Activated CD4-positive, alpha-beta T cell treated with anti-CD3 and anti-CD28 coated beads, Interleukin-2, amount 10 ng/mL, durations not matched to agents 7 days and 5 days (primary cell): ENCODE measurements at regions of chr1 and their contacts with region 1.

Region 1: DNA sequence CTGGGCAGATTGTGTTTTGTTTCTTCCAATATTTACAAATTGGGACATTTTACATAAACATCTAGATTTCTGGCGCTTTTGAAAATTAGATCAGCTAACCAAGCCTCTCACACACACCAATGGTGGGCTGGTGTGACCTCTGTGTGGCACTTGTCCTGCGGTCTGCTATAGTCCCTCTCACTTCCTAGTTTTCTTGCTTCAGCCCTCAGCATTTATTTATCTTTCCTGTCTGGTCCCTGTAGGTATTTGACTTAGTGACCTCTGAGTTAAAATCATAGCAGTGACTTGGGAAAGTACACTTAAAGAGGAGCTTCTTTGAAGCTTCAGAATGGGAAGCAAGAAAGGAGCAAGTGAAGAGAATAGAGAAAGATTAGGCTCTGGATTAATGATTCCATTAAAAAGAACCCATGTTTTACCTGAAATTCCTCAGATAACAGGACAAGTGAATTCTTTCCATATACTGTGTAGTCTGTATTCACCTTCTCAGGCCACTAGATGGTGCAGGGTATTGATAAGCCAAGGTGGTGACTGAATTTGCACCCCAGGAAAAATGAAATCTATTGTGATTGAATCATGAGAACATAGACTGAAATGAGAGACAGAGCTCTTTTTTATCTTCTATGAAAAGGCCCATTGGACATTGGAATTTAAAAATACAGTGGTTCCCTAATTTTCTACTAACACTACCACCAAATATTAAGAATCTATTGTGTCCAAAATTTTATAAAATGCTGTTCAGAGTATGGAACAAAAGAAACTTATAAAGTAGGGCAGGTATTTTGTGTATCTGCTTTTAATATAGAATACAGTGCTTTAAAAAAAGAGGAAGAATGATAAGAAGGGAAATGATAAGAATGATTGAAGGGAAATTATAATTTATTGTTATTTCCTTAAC is 7.1 kb upstream of the DIPK1A start:
- DNase-seq: peak; percentile 62
- H3K4me3 Mint-ChIP-seq: no peak overlapping the region
- H3K27ac Mint-ChIP-seq: no peak overlapping the region
- H3K4me1 Mint-ChIP-seq: peaks cover 34% of the 10 kb centered on the region
- H3K27me3 Mint-ChIP-seq: no peaks in the 10 kb centered on the region

Region 2: DNA sequence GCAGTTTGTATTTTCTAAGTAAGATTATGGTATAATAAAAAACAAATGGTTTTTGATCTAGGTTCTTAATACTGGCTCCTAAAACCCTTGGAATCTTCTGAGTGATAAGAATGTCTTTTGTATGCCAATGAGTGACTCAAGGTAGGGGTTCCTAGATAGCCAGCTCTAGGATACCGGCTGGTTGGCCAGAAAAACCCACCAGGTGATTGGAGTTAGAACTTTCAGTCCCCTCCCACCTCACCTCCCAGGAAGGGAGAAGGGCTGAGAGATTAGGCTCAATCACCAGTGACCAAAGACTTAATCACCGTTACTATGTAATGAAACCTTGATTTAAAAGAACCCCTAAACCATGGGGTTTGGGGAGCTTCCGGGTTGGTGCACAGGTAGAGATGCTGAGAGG is 1027.9 kb before region 1 on chr1:
- CTCF ChIA-PET with region 1: no interaction called
- POLR2A ChIA-PET with region 1: no interaction called
- DNase-seq: no peak
- H3K4me3 Mint-ChIP-seq: no peak overlapping the region
- H3K27ac Mint-ChIP-seq: no peak overlapping the region
- H3K4me1 Mint-ChIP-seq: no peaks in the 10 kb centered on the region
- H3K27me3 Mint-ChIP-seq: no peaks in the 10 kb centered on the region

Region 3: DNA sequence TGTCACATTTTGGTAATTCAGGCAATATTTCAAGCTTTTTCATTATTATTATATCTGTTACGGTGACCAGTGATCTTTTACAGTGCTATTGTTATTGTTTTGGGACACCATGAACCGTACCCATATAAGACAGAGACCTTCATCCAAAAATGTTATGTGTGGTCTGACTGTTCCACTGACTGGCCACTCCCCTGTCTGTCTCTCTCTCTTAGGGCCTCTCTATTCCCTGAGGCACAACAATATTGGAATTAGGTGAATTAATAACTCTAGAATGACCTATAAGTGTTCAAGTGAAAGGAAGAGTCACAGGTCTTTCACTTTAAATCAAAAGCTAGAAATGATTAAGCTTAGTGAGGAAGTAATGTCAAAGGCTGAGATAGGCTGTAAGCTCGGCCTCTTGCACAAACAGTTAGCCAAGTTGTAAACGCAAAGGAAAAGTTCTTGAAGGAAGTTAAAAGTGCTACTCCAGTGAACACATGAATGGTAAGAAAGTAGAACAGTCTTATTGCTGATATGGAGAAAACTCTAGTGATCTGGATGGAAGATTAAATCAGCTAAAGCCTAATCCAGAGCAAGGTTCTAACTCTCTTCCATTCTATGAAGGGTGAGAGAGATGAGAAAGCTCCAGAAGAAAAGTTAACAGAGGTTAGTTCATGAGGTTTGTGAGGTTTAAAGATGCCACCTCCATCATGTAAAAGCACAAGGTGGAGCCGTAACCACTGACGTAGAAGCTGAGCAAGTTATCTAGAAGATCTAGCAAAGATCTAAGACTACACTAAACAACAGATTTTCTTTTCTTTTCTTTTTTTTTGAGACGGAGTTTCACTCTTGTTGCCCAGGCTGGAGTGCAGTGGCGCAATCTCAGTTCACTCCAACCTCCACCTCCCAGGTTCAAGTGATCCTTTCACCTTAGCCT is 12.6 kb after region 1 on chr1:
- CTCF ChIA-PET with region 1: interaction called, 47 read pairs
- POLR2A ChIA-PET with region 1: interaction called, 3 read pairs
- DNase-seq: peak; percentile 78
- H3K4me3 Mint-ChIP-seq: peak overlapping the region; percentile 27
- H3K27ac Mint-ChIP-seq: peak overlapping the region; percentile 98
- H3K4me1 Mint-ChIP-seq: peaks cover 59% of the 10 kb centered on the region
- H3K27me3 Mint-ChIP-seq: no peaks in the 10 kb centered on the region